ENCODE measurements at regions of chr2 and their contacts with region 1.

Region 1: GRCh38 chr2:28224648-28225472 is 167.8 kb upstream of the FOSL2 start:
- DNase-seq: peak; percentile 66
- H3K4me3 Mint-ChIP-seq: peak overlapping the region; percentile 41
- H3K27ac Mint-ChIP-seq: peak overlapping the region; percentile 93
- H3K4me1 Mint-ChIP-seq: peaks cover 39% of the 10 kb centered on the region
- H3K27me3 Mint-ChIP-seq: no peaks in the 10 kb centered on the region
- CTCF ChIP-seq: no peak

Region 2: GRCh38 chr2:28137221-28137620 is 87.6 kb before region 1 on chr2:
- CTCF ChIA-PET with region 1: interaction called, 3 read pairs
- POLR2A ChIA-PET with region 1: interaction called, 35 read pairs
- intact Hi-C with region 1: no loop called
- DNase-seq: peak; percentile 70
- H3K4me3 Mint-ChIP-seq: peak overlapping the region; percentile 16
- H3K27ac Mint-ChIP-seq: peak overlapping the region; percentile 57
- H3K4me1 Mint-ChIP-seq: peaks cover 46% of the 10 kb centered on the region
- H3K27me3 Mint-ChIP-seq: no peaks in the 10 kb centered on the region
- CTCF ChIP-seq: no peak

Region 3: GRCh38 chr2:28175028-28175427 is 49.8 kb before region 1 on chr2:
- CTCF ChIA-PET with region 1: interaction called, 6 read pairs
- POLR2A ChIA-PET with region 1: interaction called, 21 read pairs
- intact Hi-C with region 1: no loop called
- DNase-seq: no peak
- H3K4me3 Mint-ChIP-seq: no peak overlapping the region
- H3K27ac Mint-ChIP-seq: no peak overlapping the region
- H3K4me1 Mint-ChIP-seq: peaks cover 17% of the 10 kb centered on the region
- H3K27me3 Mint-ChIP-seq: no peaks in the 10 kb centered on the region
- CTCF ChIP-seq: no peak

Region 4: GRCh38 chr2:28193627-28194403 is 31.0 kb before region 1 on chr2:
- CTCF ChIA-PET with region 1: interaction called, 3 read pairs
- POLR2A ChIA-PET with region 1: interaction called, 24 read pairs
- intact Hi-C with region 1: no loop called
- DNase-seq: no peak
- H3K4me3 Mint-ChIP-seq: no peak overlapping the region
- H3K27ac Mint-ChIP-seq: peak overlapping the region; percentile 6
- H3K4me1 Mint-ChIP-seq: peaks cover 7% of the 10 kb centered on the region
- H3K27me3 Mint-ChIP-seq: no peaks in the 10 kb centered on the region
- CTCF ChIP-seq: no peak

Region 5: DNA sequence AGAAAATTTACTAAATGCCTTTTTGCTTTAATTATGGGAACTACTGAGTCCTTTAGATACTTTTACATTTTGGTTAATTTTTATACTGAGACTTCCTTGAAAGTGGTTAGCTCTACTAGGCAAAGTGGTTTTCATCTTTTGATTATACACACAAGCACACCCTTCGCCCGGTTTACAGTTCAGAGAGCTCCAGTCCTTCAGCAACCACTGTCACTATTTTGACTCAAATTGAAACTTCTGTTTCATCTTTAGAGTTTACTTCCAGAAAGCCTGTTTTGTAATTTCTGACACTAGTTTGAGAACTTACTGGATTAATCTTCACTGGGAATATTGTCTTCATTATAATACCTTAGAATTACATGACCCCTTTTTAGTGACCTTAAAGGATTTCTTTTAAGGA is 27.5 kb after region 1 on chr2:
- CTCF ChIA-PET with region 1: interaction called, 10 read pairs
- POLR2A ChIA-PET with region 1: interaction called, 24 read pairs
- intact Hi-C with region 1: no loop called
- DNase-seq: no peak
- H3K4me3 Mint-ChIP-seq: no peak overlapping the region
- H3K27ac Mint-ChIP-seq: peak overlapping the region; percentile 39
- H3K4me1 Mint-ChIP-seq: peaks cover 7% of the 10 kb centered on the region
- H3K27me3 Mint-ChIP-seq: no peaks in the 10 kb centered on the region
- CTCF ChIP-seq: no peak

Region 6: DNA sequence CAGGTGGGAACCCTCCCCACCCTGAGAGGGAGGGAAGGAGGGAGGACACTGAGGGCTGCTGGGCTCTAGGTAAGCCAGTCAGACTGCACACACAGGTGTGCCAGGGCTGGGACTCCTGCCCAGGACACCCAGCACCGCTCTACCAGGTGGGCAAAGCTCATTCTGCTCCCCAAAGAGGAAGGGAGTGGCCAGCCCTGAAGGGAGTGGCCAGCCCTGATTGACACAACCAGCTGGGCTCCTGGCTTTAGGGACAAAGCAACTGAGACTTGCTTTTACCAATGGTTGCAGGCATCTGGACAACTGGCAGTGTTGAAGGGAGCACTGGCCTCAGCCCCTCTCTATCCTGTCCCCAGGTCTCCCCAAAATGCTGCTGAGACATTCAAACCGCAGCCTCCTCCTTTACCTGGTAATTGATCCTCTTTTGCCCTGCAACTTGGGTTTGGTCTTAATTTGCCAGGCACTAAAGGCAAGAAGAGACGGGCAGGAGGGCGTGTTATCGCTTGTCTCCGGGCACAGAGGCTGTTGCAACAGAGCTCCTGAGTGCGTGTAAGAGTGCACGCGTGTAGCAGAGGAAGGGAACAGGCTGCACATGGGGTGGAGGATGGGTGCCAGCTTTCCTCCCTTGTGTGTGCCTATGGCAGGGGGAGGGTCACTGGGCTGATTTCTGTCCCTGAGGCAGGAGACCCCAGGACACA is 153.3 kb after region 1 on chr2:
- CTCF ChIA-PET with region 1: no interaction called
- POLR2A ChIA-PET with region 1: interaction called, 27 read pairs
- intact Hi-C with region 1: no loop called
- DNase-seq: peak; percentile 93
- H3K4me3 Mint-ChIP-seq: peak overlapping the region; percentile 61
- H3K27ac Mint-ChIP-seq: peak overlapping the region; percentile 70
- H3K4me1 Mint-ChIP-seq: peaks cover 29% of the 10 kb centered on the region
- H3K27me3 Mint-ChIP-seq: no peaks in the 10 kb centered on the region
- CTCF ChIP-seq: no peak

Region 7: DNA sequence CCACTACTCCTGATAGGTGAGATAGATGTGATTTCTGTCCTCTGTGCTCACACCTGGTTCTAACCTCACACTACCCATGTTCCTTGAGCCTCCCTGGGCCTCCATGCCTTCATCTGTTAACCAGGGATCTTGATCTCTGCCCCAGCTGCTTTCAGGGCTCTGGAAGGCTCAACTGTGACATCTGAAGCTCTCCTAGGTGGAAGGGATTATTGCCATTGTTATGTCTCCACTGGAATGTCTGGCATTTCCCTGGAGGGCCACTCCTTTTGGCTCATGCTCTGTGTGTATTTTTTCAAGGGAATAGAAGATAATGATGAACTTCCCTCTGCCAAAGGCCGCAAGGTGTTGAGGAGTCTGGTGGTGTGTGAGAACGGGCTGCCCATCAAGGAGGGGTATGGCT is 808.3 kb after region 1 on chr2:
- CTCF ChIA-PET with region 1: no interaction called
- POLR2A ChIA-PET with region 1: no interaction called
- intact Hi-C with region 1: no loop called
- DNase-seq: peak; percentile 57
- H3K4me3 Mint-ChIP-seq: no peak overlapping the region
- H3K27ac Mint-ChIP-seq: peak overlapping the region; percentile 22
- H3K4me1 Mint-ChIP-seq: peaks cover 20% of the 10 kb centered on the region
- H3K27me3 Mint-ChIP-seq: no peaks in the 10 kb centered on the region
- CTCF ChIP-seq: no peak